H1 (cell line): ENCODE measurements at regions of chr17 and their contacts with region 1.

Region 1: GRCh38 chr17:74368092-74369081 is 1.1 kb downstream of the GPR142 start:
- DNase-seq: peak in 1 of 2 experiments; percentile 90
- H3K4me3 ChIP-seq: no peak overlapping the region
- H3K27ac ChIP-seq: no peak overlapping the region
- H3K4me1 ChIP-seq: peaks cover 0 to 12% (median 7%) of the 10 kb centered on the region in 4 experiments; a peak in 6 of 7 replicates
- H3K27me3 ChIP-seq: no peaks in the 10 kb centered on the region; a peak in 3 of 7 replicates
- CTCF ChIP-seq: peak; percentile 89 to 96 (median 89)
- EP300 ChIP-seq: no peak
- POLR2A ChIP-seq: no peak
- RAD21 ChIP-seq: peak; percentile 75 to 81

Region 2: DNA sequence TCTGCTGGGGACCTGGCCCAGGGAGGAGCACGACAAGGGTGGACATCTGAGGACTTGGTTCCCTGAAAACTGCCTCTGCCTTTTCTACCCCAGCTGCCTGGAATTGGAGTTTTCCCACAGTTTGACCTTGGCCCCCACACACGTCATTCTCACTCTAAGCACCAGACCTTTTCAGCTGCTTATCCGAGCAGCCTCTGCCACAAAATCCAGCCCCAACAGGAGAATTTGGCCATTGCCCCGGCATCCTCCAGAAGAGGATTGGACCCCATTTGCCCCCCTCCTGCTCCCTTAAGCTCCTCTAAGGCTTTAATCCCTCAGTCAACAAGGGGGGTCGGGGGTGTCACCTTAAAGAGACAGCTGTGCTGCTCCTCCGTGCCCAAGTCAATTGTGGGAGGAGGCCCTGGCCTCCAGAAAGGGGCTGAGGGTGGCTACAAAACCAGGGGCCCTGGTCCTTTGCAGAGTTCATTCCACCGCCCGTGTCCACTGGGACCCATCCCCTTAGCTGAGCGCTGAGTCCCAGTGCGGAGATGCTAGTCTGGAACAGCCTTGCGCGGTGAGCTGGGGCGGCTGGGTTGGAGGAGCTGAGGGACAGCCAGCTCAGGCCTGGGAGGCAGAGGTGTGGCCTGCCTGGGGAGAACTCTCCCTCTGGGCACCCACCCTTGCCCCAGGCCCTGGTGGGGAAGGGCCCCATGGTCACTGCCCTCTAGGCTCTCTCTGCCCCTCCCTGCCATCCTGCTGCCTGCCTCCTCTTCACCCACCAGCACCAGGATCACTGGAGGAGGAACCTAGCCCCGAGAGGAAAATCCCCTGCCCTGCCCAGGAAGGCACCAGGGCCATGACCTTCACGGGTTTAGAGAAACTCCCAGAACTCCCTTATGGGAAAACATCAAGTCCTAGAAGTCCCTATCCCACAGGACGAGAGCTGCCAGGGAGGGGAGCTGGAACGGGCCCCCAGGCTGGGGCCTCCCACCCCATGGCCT is 136.2 kb before region 1 on chr17:
- CTCF ChIA-PET with region 1: no interaction called
- POLR2A ChIA-PET with region 1: no interaction called
- DNase-seq: no peak
- H3K4me3 ChIP-seq: no peak overlapping the region
- H3K27ac ChIP-seq: no peak overlapping the region
- H3K4me1 ChIP-seq: peaks cover 0 to 3% (median 1%) of the 10 kb centered on the region in 4 experiments; a peak in 2 of 7 replicates
- H3K27me3 ChIP-seq: no peaks in the 10 kb centered on the region
- CTCF ChIP-seq: no peak
- EP300 ChIP-seq: no peak
- POLR2A ChIP-seq: no peak
- RAD21 ChIP-seq: no peak

Region 3: GRCh38 chr17:74280093-74280513 is 88.3 kb before region 1 on chr17:
- CTCF ChIA-PET with region 1: interaction called, 16 read pairs
- POLR2A ChIA-PET with region 1: no interaction called
- DNase-seq: no peak
- H3K4me3 ChIP-seq: no peak overlapping the region
- H3K27ac ChIP-seq: no peak overlapping the region
- H3K4me1 ChIP-seq: peaks cover 0 to 3% (median 2%) of the 10 kb centered on the region in 4 experiments; a peak in 3 of 7 replicates
- H3K27me3 ChIP-seq: peaks cover 0 to 2% (median under 1%) of the 10 kb centered on the region in 4 experiments; a peak in 4 of 7 replicates
- CTCF ChIP-seq: no peak
- EP300 ChIP-seq: no peak
- POLR2A ChIP-seq: no peak
- RAD21 ChIP-seq: no peak

Region 4: DNA sequence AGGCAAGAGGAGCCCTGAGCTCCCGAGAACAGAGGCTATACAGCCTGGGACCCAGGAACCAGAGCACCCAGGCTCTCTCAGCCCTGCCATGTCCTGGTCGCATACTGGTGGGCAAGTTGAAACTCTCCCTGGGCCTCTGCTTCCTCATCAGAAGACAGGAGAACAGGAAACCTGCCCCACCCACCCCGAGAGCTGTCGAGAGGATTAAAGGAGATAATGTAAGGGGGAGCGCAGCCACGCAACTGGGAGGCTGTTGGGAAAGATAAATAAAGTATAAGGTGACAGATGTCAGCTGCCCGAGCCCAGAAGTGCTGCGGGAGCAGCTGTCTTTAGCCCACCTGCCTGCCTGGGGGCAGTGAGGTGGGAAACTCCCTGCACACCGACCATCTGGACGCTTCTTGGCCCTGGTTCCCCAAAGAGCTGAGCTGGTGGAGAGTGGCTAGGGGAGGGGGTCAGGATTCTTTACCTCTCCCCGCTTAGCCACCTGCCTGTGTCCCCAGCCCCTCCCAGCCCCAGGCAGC is 35.6 kb before region 1 on chr17:
- CTCF ChIA-PET with region 1: interaction called, 14 read pairs
- POLR2A ChIA-PET with region 1: no interaction called
- DNase-seq: no peak
- H3K4me3 ChIP-seq: no peak overlapping the region
- H3K27ac ChIP-seq: no peak overlapping the region
- H3K4me1 ChIP-seq: peaks cover 3 to 13% (median 3%) of the 10 kb centered on the region in 4 experiments; a peak in 5 of 7 replicates
- H3K27me3 ChIP-seq: peaks cover 0 to 4% (median 3%) of the 10 kb centered on the region in 4 experiments; a peak in 3 of 7 replicates
- CTCF ChIP-seq: no peak
- EP300 ChIP-seq: no peak
- POLR2A ChIP-seq: no peak
- RAD21 ChIP-seq: no peak

Region 5: DNA sequence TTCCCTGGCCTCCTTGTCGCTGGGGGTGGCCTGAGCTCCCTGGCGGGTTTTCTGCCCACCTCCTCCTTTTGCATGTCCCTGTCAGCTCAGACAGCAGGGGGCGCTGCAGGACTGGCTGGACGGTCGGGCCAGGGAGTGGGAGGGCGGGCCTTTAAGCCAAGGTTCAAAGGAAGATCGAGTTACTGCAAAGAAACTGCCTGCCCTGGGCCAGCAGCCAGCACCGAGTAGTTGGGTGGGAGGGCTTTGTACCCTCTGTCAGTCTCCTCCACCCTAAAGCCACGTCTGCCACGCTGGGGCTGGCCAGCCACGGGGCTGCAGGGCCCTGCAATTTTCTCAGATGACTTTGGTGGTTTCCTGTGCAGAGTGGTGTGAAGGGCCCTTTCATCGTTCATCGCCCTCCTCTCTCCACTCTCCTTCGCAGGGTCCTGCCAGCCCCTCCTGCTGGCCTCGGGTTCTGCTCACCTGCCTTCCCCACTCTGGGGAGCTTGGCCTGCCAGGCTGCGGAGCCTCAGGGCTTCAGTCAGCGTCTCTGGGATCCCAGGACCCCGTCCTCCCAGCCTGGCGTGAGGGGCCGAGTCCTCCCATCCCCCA is 11.2 kb after region 1 on chr17:
- CTCF ChIA-PET with region 1: interaction called, 106 read pairs
- POLR2A ChIA-PET with region 1: interaction called, 6 read pairs
- DNase-seq: peak; percentile 75 to 99
- H3K4me3 ChIP-seq: peak overlapping the region; percentile 1 to 54 (median 36); a peak in 6 of 8 replicates
- H3K27ac ChIP-seq: no peak overlapping the region
- H3K4me1 ChIP-seq: peaks cover 0 to 9% (median 6%) of the 10 kb centered on the region in 4 experiments; a peak in 6 of 7 replicates
- H3K27me3 ChIP-seq: 0 out of 7 replicates have a peak, but pooled peaks cover 0 to 1% (median 0%) of the 10 kb centered on the region in 4 experiments
- CTCF ChIP-seq: peak; percentile 86 to 96 (median 93)
- EP300 ChIP-seq: no peak
- POLR2A ChIP-seq: no peak
- RAD21 ChIP-seq: peak; percentile 98 to 99

Region 6: GRCh38 chr17:74437702-74438101 is 69.3 kb after region 1 on chr17:
- CTCF ChIA-PET with region 1: interaction called, 54 read pairs
- POLR2A ChIA-PET with region 1: no interaction called
- DNase-seq: no peak
- H3K4me3 ChIP-seq: no peak overlapping the region
- H3K27ac ChIP-seq: no peak overlapping the region
- H3K4me1 ChIP-seq: peaks cover 5 to 16% (median 12%) of the 10 kb centered on the region in 4 experiments
- H3K27me3 ChIP-seq: peaks cover 0 to 7% (median 3%) of the 10 kb centered on the region in 4 experiments; a peak in 3 of 7 replicates
- CTCF ChIP-seq: peak; percentile 73 to 97 (median 88)
- EP300 ChIP-seq: no peak
- POLR2A ChIP-seq: no peak
- RAD21 ChIP-seq: peak; percentile 96

Region 7: DNA sequence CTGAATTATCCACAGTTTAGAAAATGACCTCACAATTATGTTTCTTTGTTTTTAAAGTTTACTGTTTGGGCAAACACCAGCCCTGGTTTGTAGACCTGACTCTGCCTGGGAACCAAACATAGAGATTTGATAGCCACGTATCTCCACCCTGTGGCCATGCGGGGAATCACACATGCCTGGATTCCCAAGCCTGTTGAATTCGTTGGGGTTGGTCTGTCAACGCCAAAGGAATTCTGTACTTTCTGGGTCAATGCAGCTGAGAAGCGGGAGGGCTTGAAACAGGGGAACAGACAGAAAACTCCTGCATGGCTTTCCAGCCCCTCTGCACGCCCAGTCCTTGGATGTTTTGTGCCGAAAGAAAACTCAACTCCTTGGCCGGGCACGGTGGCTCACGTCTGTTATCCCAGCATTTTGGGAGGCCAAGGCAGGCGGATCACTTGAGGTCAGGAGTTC is 125.0 kb after region 1 on chr17:
- CTCF ChIA-PET with region 1: interaction called, 60 read pairs
- POLR2A ChIA-PET with region 1: no interaction called
- DNase-seq: peak; percentile 41 to 89
- H3K4me3 ChIP-seq: no peak overlapping the region
- H3K27ac ChIP-seq: no peak overlapping the region
- H3K4me1 ChIP-seq: no peaks in the 10 kb centered on the region
- H3K27me3 ChIP-seq: no peaks in the 10 kb centered on the region
- CTCF ChIP-seq: peak; percentile 91 to 98 (median 92)
- EP300 ChIP-seq: no peak
- POLR2A ChIP-seq: no peak
- RAD21 ChIP-seq: peak; percentile 94 to 97